AG04450 (cell line): ENCODE measurements at regions of chr10 and their contacts with region 1.

Region 1: GRCh38 chr10:100878291-100878910 is 34.4 kb upstream of the SLF2 start:
- DNase-seq: peak; percentile 51
- H3K4me3 ChIP-seq: no peak overlapping the region
- H3K27ac ChIP-seq: no peak overlapping the region
- H3K27me3 ChIP-seq: no peaks in the 10 kb centered on the region
- CTCF ChIP-seq: peak; percentile 85

Region 2: GRCh38 chr10:99630439-99630838 is 1248.0 kb before region 1 on chr10:
- CTCF ChIA-PET with region 1: interaction called, 13 read pairs
- POLR2A ChIA-PET with region 1: no interaction called
- DNase-seq: peak; percentile 20
- H3K4me3 ChIP-seq: no peak overlapping the region
- H3K27ac ChIP-seq: no peak overlapping the region
- H3K27me3 ChIP-seq: peaks cover 3% of the 10 kb centered on the region
- CTCF ChIP-seq: peak; percentile 59

Region 3: GRCh38 chr10:100481462-100482081 is 396.8 kb before region 1 on chr10:
- CTCF ChIA-PET with region 1: interaction called, 15 read pairs
- POLR2A ChIA-PET with region 1: no interaction called
- DNase-seq: peak; percentile 59
- H3K4me3 ChIP-seq: peak overlapping the region; percentile 53
- H3K27ac ChIP-seq: no peak overlapping the region
- H3K27me3 ChIP-seq: peaks cover 67% of the 10 kb centered on the region
- CTCF ChIP-seq: no peak

Region 4: GRCh38 chr10:100535715-100536353 is 342.6 kb before region 1 on chr10 and contains the start of gene HIF1AN:
- CTCF ChIA-PET with region 1: interaction called, 27 read pairs
- POLR2A ChIA-PET with region 1: no interaction called
- DNase-seq: peak; percentile 89
- H3K4me3 ChIP-seq: peak within 1 kb of the TSS; percentile 88
- H3K27ac ChIP-seq: no peak within 1 kb of the TSS
- H3K27me3 ChIP-seq: no peaks in the 10 kb centered on the region
- CTCF ChIP-seq: peak; percentile 98
- polyA plus RNA-seq, gene HIF1AN: 29.7 and 31.0 TPM in 2 replicates

Region 5: GRCh38 chr10:100670828-100671479 is 207.4 kb before region 1 on chr10:
- CTCF ChIA-PET with region 1: interaction called, 23 read pairs
- POLR2A ChIA-PET with region 1: no interaction called
- DNase-seq: no peak
- H3K4me3 ChIP-seq: no peak overlapping the region
- H3K27ac ChIP-seq: no peak overlapping the region
- H3K27me3 ChIP-seq: peaks cover 47% of the 10 kb centered on the region
- CTCF ChIP-seq: peak; percentile 45

Region 6: GRCh38 chr10:100766693-100767421 is 111.5 kb before region 1 on chr10:
- CTCF ChIA-PET with region 1: no interaction called
- POLR2A ChIA-PET with region 1: no interaction called
- DNase-seq: no peak
- H3K4me3 ChIP-seq: no peak overlapping the region
- H3K27ac ChIP-seq: no peak overlapping the region
- H3K27me3 ChIP-seq: peaks cover 26% of the 10 kb centered on the region
- CTCF ChIP-seq: no peak

Region 7: DNA sequence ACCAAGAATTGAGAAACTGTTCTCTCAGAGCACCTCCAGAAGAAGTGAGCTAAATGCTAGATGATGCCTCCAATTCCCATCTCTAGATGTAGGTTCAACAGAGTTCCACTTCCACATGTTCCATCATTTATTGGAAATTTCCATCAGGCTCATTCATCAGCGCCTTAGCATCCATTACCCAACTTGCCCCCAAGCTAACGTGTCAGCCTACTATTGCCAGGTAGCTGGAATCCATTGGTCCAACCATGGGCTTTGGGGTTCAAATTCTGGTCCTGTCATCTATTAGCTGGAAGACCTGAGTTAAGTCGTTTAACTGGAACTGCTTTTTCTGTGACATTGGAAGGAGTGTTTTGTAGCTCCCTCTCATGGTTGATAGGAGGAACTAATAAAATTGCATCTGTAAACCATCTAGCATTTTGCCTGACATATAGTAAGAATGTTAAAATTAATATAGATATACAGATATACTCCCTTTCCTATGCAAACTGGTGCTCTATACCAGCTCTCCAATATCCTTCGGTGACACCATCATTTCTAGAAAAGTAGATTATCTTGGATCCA is 10.5 kb after region 1 on chr10:
- CTCF ChIA-PET with region 1: interaction called, 11 read pairs
- POLR2A ChIA-PET with region 1: no interaction called
- DNase-seq: no peak
- H3K4me3 ChIP-seq: no peak overlapping the region
- H3K27ac ChIP-seq: no peak overlapping the region
- H3K27me3 ChIP-seq: no peaks in the 10 kb centered on the region
- CTCF ChIP-seq: 0 out of 2 replicates have a peak, but pooled peaks have one; percentile 21